ENCODE measurements at regions of chr14 and their contacts with region 1.

Region 1: DNA sequence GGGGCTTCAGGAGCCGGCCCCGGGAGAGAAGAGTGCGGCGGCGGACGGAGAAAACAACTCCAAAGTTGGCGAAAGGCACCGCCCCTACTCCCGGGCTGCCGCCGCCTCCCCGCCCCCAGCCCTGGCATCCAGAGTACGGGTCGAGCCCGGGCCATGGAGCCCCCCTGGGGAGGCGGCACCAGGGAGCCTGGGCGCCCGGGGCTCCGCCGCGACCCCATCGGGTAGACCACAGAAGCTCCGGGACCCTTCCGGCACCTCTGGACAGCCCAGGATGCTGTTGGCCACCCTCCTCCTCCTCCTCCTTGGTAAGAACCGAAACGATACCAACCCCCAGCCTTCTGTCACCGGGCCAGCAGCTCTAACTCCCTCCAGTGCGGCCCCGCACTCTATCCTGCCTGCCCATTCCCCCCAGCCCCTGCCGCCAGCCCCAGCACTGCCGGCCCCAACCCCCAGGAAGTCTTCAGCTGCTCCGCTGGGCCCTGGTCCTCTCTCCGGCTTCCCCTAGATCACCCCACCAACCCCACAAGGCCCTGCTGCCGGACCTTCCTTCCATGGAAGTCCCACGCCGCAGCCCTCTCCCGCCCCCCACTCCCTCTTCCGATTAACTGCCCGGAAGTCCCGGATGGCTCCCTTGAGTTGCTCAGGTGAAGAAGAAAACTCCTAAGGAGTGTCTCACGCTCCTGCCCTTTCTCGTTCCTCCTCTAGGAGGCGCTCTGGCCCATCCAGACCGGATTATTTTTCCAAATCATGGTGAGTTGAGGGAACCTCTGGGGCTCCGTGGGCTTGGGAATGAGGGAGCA is 693 bp downstream of the LRP10 start:
- DNase-seq: peak; percentile 96
- H3K4me3 ChIP-seq: peak overlapping the region; percentile 92 to 100 (median 98)
- H3K27ac ChIP-seq: peak overlapping the region; percentile 98 to 100 (median 100)
- H3K4me1 ChIP-seq: peaks cover 27 to 60% (median 56%) of the 10 kb centered on the region in 4 donors
- H3K27me3 ChIP-seq: peaks cover 0 to 3% (median 0%) of the 10 kb centered on the region in 4 donors
- CTCF ChIP-seq: peak; percentile 94 to 100 (median 98)
- EP300 ChIP-seq: no peak
- POLR2A ChIP-seq: no peak

Region 2: GRCh38 chr14:22900081-22900799 is 28.0 kb after region 1 on chr14:
- intact Hi-C with region 1: loop called (anchors 1 kb)
- DNase-seq: no peak
- H3K4me3 ChIP-seq: no peak overlapping the region
- H3K27ac ChIP-seq: peak overlapping the region; percentile 62 to 76 (median 66)
- H3K4me1 ChIP-seq: peaks cover 9 to 37% (median 31%) of the 10 kb centered on the region in 4 donors
- H3K27me3 ChIP-seq: no peaks in the 10 kb centered on the region
- CTCF ChIP-seq: peak; percentile 52 to 62 (median 56)
- EP300 ChIP-seq: no peak
- POLR2A ChIP-seq: no peak

Region 3: GRCh38 chr14:23366426-23366921 is 494.2 kb after region 1 on chr14:
- intact Hi-C with region 1: no loop called
- DNase-seq: no peak
- H3K4me3 ChIP-seq: peak overlapping the region; percentile 61 to 72 (median 66)
- H3K27ac ChIP-seq: peak overlapping the region; percentile 96 to 98 (median 96)
- H3K4me1 ChIP-seq: peaks cover 13 to 59% (median 55%) of the 10 kb centered on the region in 4 donors
- H3K27me3 ChIP-seq: peaks cover 0 to 16% (median 0%) of the 10 kb centered on the region in 4 donors
- CTCF ChIP-seq: no peak
- EP300 ChIP-seq: no peak
- POLR2A ChIP-seq: no peak

Measured in esophagus muscularis mucosa (tissue), 4 donors.